Panc1 (cell line): ENCODE measurements at regions of chr5 and their contacts with region 1.

Region 1: GRCh38 chr5:141412854-141413539 is at the start of gene PCDHGA10:
- DNase-seq: no peak
- ATAC-seq: peak; percentile 72
- H3K4me3 ChIP-seq: peak within 1 kb of the TSS in 1 of 2 experiments; percentile 7; a peak in 1 of 4 replicates
- H3K27ac ChIP-seq: no peak within 1 kb of the TSS
- H3K4me1 ChIP-seq: no peaks in the 10 kb centered on the region
- H3K27me3 ChIP-seq: no peaks in the 10 kb centered on the region
- CTCF ChIP-seq: peak; percentile 87
- total RNA-seq, gene PCDHGA10: 0.69 TPM

Region 2: DNA sequence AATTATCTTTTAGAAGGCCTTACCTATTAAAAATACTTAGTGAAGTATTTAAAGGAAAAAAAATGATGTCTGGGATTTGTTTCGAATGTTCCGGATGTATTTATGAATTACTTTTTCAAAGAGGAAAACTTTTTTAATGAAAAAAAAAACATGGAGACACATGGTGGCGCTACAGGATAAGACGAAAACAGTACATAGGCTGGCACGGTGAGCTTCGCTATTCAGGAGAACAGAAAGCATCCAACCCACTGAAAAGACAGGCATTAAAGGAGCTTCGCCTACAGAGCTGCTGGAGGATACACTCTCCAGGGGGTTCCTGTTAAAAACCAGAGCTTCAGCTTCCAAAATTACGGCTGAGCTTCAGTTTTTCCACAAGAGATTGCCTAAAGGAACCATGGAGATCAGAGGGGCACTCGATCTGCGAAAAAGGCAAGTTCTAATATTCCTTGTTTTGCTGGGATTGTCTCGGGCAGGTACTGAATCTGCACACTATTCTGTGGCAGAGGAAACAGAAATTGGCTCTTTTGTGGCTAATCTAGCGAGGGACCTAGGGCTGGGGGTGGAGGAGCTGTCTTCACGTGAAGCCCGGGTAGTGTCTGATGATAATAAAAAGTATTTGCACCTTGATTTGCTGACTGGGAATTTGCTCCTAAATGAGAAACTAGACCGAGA is 189.7 kb before region 1 on chr5 and contains the start of gene PCDHB14:
- CTCF ChIA-PET with region 1: interaction called, 11 read pairs
- POLR2A ChIA-PET with region 1: no interaction called
- in situ Hi-C with region 1: no loop called
- intact Hi-C with region 1: loop called (anchors 5 kb)
- DNase-seq: peak; percentile 22
- ATAC-seq: peak; percentile 94
- H3K4me3 ChIP-seq: peak within 1 kb of the TSS; percentile 35 to 51
- H3K27ac ChIP-seq: no peak within 1 kb of the TSS
- H3K4me1 ChIP-seq: no peaks in the 10 kb centered on the region
- H3K27me3 ChIP-seq: peaks cover 3% of the 10 kb centered on the region; the same call in 1 of the 2 replicates
- CTCF ChIP-seq: peak; percentile 72
- total RNA-seq, gene PCDHB14: 0.80 TPM

Region 3: DNA sequence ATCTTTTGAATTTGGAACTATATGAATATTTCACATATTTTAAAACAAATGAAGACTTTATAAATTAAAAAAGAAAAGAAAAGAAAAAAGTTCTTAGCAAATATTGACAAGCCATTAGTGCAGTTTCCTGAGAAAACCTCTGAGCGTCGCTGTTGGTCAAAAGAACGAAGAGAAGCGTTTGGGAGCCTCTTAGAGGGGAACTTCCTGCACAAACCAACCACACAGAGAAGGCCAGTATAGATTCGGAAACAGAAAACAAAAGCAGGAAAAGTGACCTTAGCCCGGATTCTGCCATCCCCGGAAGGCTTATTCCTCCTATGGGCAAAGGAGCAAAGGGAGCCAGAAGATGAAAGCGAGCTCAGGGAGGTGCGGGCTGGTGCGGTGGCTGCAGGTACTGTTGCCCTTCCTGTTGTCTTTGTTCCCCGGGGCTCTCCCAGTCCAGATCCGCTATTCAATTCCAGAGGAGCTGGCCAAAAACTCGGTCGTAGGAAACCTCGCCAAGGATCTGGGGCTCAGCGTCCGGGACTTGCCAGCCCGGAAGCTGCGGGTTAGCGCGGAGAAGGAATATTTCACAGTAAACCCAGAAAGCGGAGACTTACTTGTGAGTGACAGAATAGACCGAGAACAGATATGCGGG is 53.1 kb before region 1 on chr5 and contains the start of gene PCDHGB2:
- CTCF ChIA-PET with region 1: interaction called, 6 read pairs
- POLR2A ChIA-PET with region 1: no interaction called
- in situ Hi-C with region 1: no loop called
- intact Hi-C with region 1: loop called (anchors 10 kb)
- DNase-seq: peak; percentile 39
- ATAC-seq: peak; percentile 85
- H3K4me3 ChIP-seq: peak within 1 kb of the TSS; percentile 41 to 82
- H3K27ac ChIP-seq: no peak within 1 kb of the TSS
- H3K4me1 ChIP-seq: no peaks in the 10 kb centered on the region
- H3K27me3 ChIP-seq: no peaks in the 10 kb centered on the region
- CTCF ChIP-seq: peak; percentile 75
- total RNA-seq, gene PCDHGB2: 5.3 TPM

Region 4: DNA sequence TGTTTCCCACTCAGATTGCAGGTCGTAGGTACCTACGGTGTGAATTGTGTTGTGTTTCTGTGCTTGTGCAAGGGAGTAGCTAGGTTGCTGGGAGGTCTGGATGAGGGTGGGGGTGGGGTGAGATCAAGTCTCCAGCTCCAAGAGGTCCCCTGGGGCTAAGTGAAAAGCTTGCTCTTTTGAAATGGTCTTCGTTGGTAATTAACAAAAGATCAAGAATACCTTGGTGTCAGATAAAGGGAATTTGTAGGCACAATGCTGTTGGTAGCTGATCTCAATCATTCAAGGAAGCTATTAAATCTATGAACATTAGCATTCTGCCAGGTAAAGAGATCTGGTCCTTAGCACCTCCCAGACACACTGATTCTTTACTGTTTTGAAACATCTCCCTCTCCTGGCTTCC is 70.9 kb after region 1 on chr5:
- CTCF ChIA-PET with region 1: interaction called, 13 read pairs
- POLR2A ChIA-PET with region 1: no interaction called
- in situ Hi-C with region 1: no loop called
- intact Hi-C with region 1: no loop called
- DNase-seq: no peak
- ATAC-seq: no peak
- H3K4me3 ChIP-seq: no peak overlapping the region
- H3K27ac ChIP-seq: no peak overlapping the region
- H3K4me1 ChIP-seq: no peaks in the 10 kb centered on the region; the same call in 1 of the 2 replicates
- H3K27me3 ChIP-seq: no peaks in the 10 kb centered on the region
- CTCF ChIP-seq: no peak

Region 5: DNA sequence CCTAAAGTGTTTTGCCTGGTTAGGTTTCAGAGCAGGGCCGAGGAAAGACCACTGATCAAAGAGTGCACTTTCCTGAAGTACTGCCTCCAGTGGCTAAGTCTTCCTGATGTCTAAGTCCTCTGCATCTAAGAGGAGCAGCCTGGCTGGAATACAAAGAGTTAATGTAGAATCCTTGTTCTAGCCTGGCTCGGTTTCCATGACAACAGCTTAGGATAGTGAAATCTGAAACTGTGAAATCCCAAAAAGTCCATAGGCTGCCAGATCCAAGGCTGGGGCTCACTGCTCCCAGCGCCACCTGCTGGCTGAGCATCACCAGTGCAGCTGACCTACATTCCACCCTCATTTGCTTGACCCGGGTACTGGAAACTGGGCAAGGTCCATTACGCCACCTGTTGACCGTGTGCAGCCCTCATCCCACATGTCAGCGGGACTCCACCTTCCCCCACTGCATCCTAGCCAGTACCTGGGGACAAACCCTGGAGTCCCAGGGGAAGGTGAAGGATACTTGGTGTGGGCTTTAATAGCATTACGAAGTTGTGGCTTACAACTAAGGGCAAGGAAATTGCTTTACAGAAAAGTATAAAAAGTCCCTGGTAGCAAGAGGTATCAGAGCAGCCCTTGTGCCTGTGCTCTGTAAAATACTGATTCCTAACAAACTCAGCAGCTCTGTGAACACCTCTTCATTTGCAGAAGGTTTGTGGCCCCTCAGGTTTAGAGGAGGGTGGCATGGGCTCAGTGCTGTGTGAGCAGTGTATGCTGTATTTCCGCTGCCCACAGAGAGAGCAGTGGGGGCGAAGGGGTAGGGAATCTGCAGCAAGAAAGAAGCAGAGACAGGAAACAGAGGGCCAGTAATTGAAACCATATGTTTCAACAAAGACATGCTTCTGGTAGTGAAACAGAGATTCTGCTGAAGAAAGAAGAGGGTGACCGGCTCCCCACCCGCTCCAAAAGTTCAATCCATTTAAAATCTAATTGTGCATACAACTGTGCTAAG is 111.9 kb after region 1 on chr5:
- CTCF ChIA-PET with region 1: interaction called, 17 read pairs
- POLR2A ChIA-PET with region 1: no interaction called
- in situ Hi-C with region 1: no loop called
- intact Hi-C with region 1: loop called (anchors 1 kb)
- DNase-seq: peak; percentile 84
- ATAC-seq: peak; percentile 90
- H3K4me3 ChIP-seq: no peak overlapping the region
- H3K27ac ChIP-seq: peak overlapping the region; percentile 51
- H3K4me1 ChIP-seq: peaks cover 35% of the 10 kb centered on the region
- H3K27me3 ChIP-seq: no peaks in the 10 kb centered on the region
- CTCF ChIP-seq: peak; percentile 100

Region 6: DNA sequence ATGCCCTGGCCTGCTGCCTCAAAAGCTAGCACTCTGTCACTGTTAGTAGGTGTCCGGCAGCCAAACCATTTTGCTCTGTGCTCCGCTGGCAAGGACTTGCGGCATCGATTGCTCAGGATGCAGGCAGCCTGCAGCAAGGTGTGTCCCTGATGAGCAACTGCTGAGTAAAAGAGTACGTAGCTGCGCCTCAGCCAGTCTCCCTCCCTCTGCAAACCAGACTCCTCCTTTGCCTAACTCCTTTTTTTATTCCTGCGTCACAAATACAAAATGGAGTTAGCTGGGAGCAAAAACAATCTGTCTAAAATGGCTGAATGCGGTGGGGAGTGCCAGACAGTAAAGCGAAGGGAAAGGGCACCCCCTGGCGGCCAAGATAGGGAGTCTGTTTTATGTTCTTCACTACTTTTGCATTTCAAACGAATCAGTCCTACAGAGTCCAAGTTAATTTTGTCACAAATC is 144.7 kb after region 1 on chr5:
- CTCF ChIA-PET with region 1: interaction called, 10 read pairs
- POLR2A ChIA-PET with region 1: interaction called, 3 read pairs
- in situ Hi-C with region 1: no loop called
- intact Hi-C with region 1: loop called (anchors 2 kb)
- DNase-seq: peak; percentile 82
- ATAC-seq: peak; percentile 92
- H3K4me3 ChIP-seq: peak overlapping the region; percentile 26 to 54
- H3K27ac ChIP-seq: peak overlapping the region; percentile 84
- H3K4me1 ChIP-seq: peaks cover 17% of the 10 kb centered on the region
- H3K27me3 ChIP-seq: no peaks in the 10 kb centered on the region
- CTCF ChIP-seq: peak; percentile 92

Region 7: DNA sequence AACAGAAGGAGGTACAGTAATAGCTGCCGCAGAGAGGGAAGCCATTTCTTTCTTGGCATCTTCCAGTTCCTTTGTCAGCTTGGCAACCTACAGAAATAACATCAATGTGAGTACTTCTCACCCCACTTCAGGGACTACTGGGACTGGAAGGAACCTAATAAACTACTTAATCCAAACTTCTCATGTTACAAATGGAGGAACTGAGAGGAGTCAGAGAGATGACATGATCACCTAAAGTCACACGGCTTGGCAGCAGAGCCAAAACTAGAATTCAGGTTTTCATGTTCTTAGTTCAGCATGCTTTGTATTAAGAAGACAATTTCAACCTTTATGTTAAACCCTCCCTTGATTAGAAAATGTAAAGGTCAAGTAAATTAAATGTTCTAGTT is 161.1 kb after region 1 on chr5:
- CTCF ChIA-PET with region 1: no interaction called
- POLR2A ChIA-PET with region 1: no interaction called
- in situ Hi-C with region 1: no loop called
- intact Hi-C with region 1: no loop called
- DNase-seq: no peak
- ATAC-seq: 0 out of 2 replicates have a peak, but pooled peaks have one; percentile 17
- H3K4me3 ChIP-seq: no peak overlapping the region
- H3K27ac ChIP-seq: no peak overlapping the region
- H3K4me1 ChIP-seq: no peaks in the 10 kb centered on the region
- H3K27me3 ChIP-seq: no peaks in the 10 kb centered on the region
- CTCF ChIP-seq: no peak

Region 8: GRCh38 chr5:141585594-141585993 is 172.6 kb after region 1 on chr5:
- CTCF ChIA-PET with region 1: no interaction called
- POLR2A ChIA-PET with region 1: no interaction called
- in situ Hi-C with region 1: no loop called
- intact Hi-C with region 1: no loop called
- DNase-seq: no peak
- ATAC-seq: no peak
- H3K4me3 ChIP-seq: no peak overlapping the region
- H3K27ac ChIP-seq: no peak overlapping the region
- H3K4me1 ChIP-seq: no peaks in the 10 kb centered on the region
- H3K27me3 ChIP-seq: no peaks in the 10 kb centered on the region
- CTCF ChIP-seq: no peak